ENCODE measurements at regions of chr2 and their contacts with region 1.

Region 1: GRCh38 chr2:70124983-70125480 is 37.8 kb downstream of the PCBP1 start:
- DNase-seq: peak; percentile 58
- H3K4me3 Mint-ChIP-seq: peak overlapping the region; percentile 92
- H3K27ac Mint-ChIP-seq: peak overlapping the region; percentile 100
- H3K4me1 Mint-ChIP-seq: peaks cover 68% of the 10 kb centered on the region
- H3K27me3 Mint-ChIP-seq: no peaks in the 10 kb centered on the region

Region 2: GRCh38 chr2:69581774-69582581 is 543.1 kb before region 1 on chr2:
- CTCF ChIA-PET with region 1: no interaction called
- intact Hi-C with region 1: no loop called
- DNase-seq: peak; percentile 25
- H3K4me3 Mint-ChIP-seq: peak overlapping the region; percentile 48
- H3K27ac Mint-ChIP-seq: peak overlapping the region; percentile 69
- H3K4me1 Mint-ChIP-seq: peaks cover 91% of the 10 kb centered on the region
- H3K27me3 Mint-ChIP-seq: no peaks in the 10 kb centered on the region

Region 3: GRCh38 chr2:70104231-70105111 is 20.6 kb before region 1 on chr2:
- CTCF ChIA-PET with region 1: interaction called, 7 read pairs
- intact Hi-C with region 1: loop called (anchors 1 kb)
- DNase-seq: peak; percentile 81
- H3K4me3 Mint-ChIP-seq: peak overlapping the region; percentile 72
- H3K27ac Mint-ChIP-seq: peak overlapping the region; percentile 93
- H3K4me1 Mint-ChIP-seq: peaks cover 58% of the 10 kb centered on the region
- H3K27me3 Mint-ChIP-seq: no peaks in the 10 kb centered on the region

Measured in activated naive CD4-positive, alpha-beta T cell treated with anti-CD3 and anti-CD28 coated beads for 36 hours (primary cell).